Posterior vena cava (tissue), 2 donors: ENCODE measurements at regions of chr4 and their contacts with region 1.

Region 1: DNA sequence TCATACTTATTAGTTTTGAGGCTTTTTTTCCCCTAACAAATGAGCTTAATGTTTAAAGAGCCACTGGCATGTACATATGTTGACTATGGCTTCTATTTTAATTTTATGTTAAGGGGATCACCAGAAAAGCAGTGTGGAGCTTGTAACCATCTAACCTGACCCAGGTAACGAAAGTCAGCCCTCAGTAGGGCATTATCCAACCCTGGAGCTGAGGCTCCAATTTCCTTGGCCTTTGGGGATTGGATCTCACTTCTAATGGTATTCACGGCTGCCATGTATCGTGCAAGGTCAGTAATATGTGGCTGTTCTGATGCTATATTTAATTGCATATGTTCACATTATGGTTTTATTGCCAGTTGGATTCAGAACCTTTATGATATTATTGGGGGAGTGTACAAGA is 75.2 kb upstream of the CCSER1 start:
- DNase-seq: no peak

Region 2: GRCh38 chr4:90122355-90122748 is 70.4 kb after region 1 on chr4:
- intact Hi-C with region 1: loop called in 1 of 2 experiments (anchors 2 kb)
- DNase-seq: no peak